Activated CD4-positive, alpha-beta memory T cell treated with anti-CD3 and anti-CD28 coated beads for 36 hours (primary cell): ENCODE measurements at regions of chr1 and their contacts with region 1.

Region 1: DNA sequence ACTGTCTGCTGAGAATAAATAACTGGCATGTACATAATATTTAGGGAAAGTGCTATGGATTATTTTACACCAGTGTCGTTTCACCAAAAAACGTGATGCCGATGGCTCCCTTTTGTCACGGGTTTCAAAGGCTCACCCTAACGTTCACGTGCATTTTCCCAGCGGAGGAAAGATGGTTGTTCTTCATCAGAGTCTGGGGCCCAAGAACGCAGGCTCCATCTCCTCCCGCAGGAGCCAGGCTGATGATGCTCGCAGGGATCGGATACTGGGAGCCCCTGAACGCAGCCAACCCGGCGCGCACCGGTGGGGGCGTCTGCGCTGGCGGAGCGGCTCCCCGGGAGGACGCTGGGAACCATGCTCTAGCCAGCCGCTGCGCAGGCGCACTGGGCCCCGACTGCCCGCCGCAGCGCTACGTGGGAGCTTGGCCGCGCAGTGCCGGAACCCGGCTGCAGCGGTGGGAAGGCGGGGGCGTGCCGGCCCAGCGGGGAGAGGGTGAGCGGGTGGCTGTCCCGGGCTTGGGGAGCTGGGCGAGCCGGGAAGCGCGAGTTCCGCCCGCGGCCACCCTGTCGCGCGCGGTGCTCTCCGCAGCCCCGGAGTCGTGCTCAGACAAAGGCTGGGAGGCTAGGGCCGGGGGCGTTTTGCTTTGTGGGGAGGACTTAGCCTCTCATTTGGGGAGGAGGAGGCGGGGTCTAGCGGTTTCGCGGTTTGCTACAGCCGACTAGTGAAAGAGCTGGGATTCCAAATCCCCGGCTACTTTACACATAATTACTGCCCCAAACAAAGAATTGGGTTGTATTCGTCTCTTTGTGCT is at the start of gene ZFP69B:
- DNase-seq: peak; percentile 94
- H3K4me3 Mint-ChIP-seq: peak within 1 kb of the TSS; percentile 78
- H3K27ac Mint-ChIP-seq: peak within 1 kb of the TSS; percentile 97
- H3K4me1 Mint-ChIP-seq: peaks cover 32% of the 10 kb centered on the region
- H3K27me3 Mint-ChIP-seq: no peaks in the 10 kb centered on the region
- total RNA-seq, gene ZFP69B: 4.8 to 5.7 TPM

Region 2: GRCh38 chr1:40344597-40344996 is 105.3 kb before region 1 on chr1:
- CTCF ChIA-PET with region 1: no interaction called
- POLR2A ChIA-PET with region 1: no interaction called
- intact Hi-C with region 1: no loop called
- DNase-seq: peak; percentile 58
- H3K4me3 Mint-ChIP-seq: peak overlapping the region; percentile 10
- H3K27ac Mint-ChIP-seq: peak overlapping the region; percentile 36
- H3K4me1 Mint-ChIP-seq: peaks cover 51% of the 10 kb centered on the region
- H3K27me3 Mint-ChIP-seq: no peaks in the 10 kb centered on the region

Region 3: GRCh38 chr1:40373338-40374283 is 76.3 kb before region 1 on chr1 and contains the start of gene SMAP2:
- CTCF ChIA-PET with region 1: no interaction called
- POLR2A ChIA-PET with region 1: interaction called, 15 read pairs
- intact Hi-C with region 1: no loop called
- DNase-seq: peak; percentile 98
- H3K4me3 Mint-ChIP-seq: peak within 1 kb of the TSS; percentile 97
- H3K27ac Mint-ChIP-seq: peak within 1 kb of the TSS; percentile 99
- H3K4me1 Mint-ChIP-seq: peaks cover 44% of the 10 kb centered on the region
- H3K27me3 Mint-ChIP-seq: peaks cover 1% of the 10 kb centered on the region
- total RNA-seq, gene SMAP2: 250 to 254 TPM

Region 4: GRCh38 chr1:40438391-40439015 is 11.4 kb before region 1 on chr1:
- CTCF ChIA-PET with region 1: interaction called, 22 read pairs
- POLR2A ChIA-PET with region 1: no interaction called
- intact Hi-C with region 1: no loop called
- DNase-seq: no peak
- H3K4me3 Mint-ChIP-seq: no peak overlapping the region
- H3K27ac Mint-ChIP-seq: no peak overlapping the region
- H3K4me1 Mint-ChIP-seq: no peaks in the 10 kb centered on the region
- H3K27me3 Mint-ChIP-seq: no peaks in the 10 kb centered on the region

Region 5: GRCh38 chr1:40508375-40509341 is 58.8 kb after region 1 on chr1 and contains the start of gene EXO5:
- CTCF ChIA-PET with region 1: interaction called, 3 read pairs
- POLR2A ChIA-PET with region 1: interaction called, 8 read pairs
- intact Hi-C with region 1: loop called (anchors 1 kb)
- DNase-seq: peak; percentile 92
- H3K4me3 Mint-ChIP-seq: peak within 1 kb of the TSS; percentile 77
- H3K27ac Mint-ChIP-seq: peak within 1 kb of the TSS; percentile 78
- H3K4me1 Mint-ChIP-seq: peaks cover 11% of the 10 kb centered on the region
- H3K27me3 Mint-ChIP-seq: no peaks in the 10 kb centered on the region
- total RNA-seq, gene EXO5: 9.7 to 11.7 TPM